PC-3 (cell line): ENCODE measurements at regions of chr6 and their contacts with region 1.

Region 1: GRCh38 chr6:137313928-137314855 is 95.0 kb upstream of the IFNGR1 start:
- DNase-seq: peak; percentile 67
- ATAC-seq: peak; percentile 71
- H3K4me3 ChIP-seq: no peak overlapping the region
- H3K27ac ChIP-seq: no peak overlapping the region
- H3K4me1 ChIP-seq: peaks cover 10% of the 10 kb centered on the region
- H3K27me3 ChIP-seq: no peaks in the 10 kb centered on the region
- CTCF ChIP-seq: peak; percentile 84

Region 2: GRCh38 chr6:137076277-137077068 is 237.7 kb before region 1 on chr6:
- CTCF ChIA-PET with region 1: no interaction called
- POLR2A ChIA-PET with region 1: no interaction called
- intact Hi-C with region 1: loop called (anchors 5 kb)
- DNase-seq: peak; percentile 80
- ATAC-seq: peak; percentile 100
- H3K4me3 ChIP-seq: no peak overlapping the region
- H3K27ac ChIP-seq: no peak overlapping the region
- H3K4me1 ChIP-seq: no peaks in the 10 kb centered on the region
- H3K27me3 ChIP-seq: no peaks in the 10 kb centered on the region
- CTCF ChIP-seq: peak; percentile 79

Region 3: DNA sequence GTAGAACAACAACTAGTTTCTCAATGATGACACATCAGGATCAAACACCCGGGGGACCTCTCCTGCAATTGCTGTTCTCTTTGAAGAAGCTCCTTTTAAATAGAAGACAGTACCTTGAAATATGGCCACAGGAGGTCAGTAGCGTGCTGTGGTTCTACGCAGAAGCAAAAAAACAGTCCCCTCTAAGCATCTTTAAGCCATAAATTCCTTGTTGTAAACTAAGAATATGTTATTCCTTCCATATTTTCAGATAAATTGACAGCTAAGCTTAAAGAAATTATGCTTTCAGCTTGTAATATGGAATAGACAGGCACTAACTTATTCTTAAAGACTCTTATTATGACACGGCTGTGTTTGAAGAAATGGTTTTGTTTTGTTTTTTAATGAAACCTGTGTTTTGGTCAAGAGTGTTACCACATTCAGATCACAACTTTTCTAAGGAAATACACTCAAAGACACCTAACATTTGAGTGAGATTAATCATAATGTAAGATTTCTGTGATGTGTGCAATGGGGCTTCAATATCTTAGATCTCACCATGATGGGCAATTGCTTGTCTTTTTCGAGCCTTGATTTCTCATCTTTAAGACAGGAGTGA is 219.7 kb before region 1 on chr6:
- CTCF ChIA-PET with region 1: interaction called, 13 read pairs
- POLR2A ChIA-PET with region 1: no interaction called
- intact Hi-C with region 1: loop called (anchors 2 kb)
- DNase-seq: peak; percentile 83
- ATAC-seq: peak; percentile 81
- H3K4me3 ChIP-seq: no peak overlapping the region
- H3K27ac ChIP-seq: no peak overlapping the region
- H3K4me1 ChIP-seq: 0 out of 2 replicates have a peak, but pooled peaks cover 4% of the 10 kb centered on the region
- H3K27me3 ChIP-seq: no peaks in the 10 kb centered on the region
- CTCF ChIP-seq: peak; percentile 77

Region 4: DNA sequence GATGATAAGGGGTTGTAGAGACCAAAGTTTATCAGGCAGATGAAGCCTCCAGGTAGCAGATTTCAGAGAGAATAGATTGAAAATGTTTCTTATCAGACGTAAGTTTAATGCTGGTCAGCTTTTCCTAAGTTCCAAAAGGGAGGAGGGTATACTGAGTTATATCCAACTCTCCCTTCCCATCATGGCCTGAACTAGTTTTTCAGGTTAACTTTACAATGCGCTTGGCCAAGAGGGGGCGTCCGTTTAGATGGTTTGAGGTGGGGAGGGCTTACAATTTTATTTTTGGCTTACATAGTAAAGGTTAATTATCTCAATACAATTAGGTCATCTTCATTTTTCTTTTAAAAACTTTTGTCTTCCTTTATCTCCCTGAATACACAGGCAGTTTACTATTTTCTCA is 121.4 kb before region 1 on chr6:
- CTCF ChIA-PET with region 1: interaction called, 11 read pairs
- POLR2A ChIA-PET with region 1: no interaction called
- intact Hi-C with region 1: no loop called
- DNase-seq: no peak
- ATAC-seq: no peak
- H3K4me3 ChIP-seq: no peak overlapping the region
- H3K27ac ChIP-seq: no peak overlapping the region
- H3K4me1 ChIP-seq: no peaks in the 10 kb centered on the region
- H3K27me3 ChIP-seq: no peaks in the 10 kb centered on the region
- CTCF ChIP-seq: no peak

Region 5: GRCh38 chr6:137271245-137272183 is 42.7 kb before region 1 on chr6:
- CTCF ChIA-PET with region 1: interaction called, 6 read pairs
- POLR2A ChIA-PET with region 1: no interaction called
- intact Hi-C with region 1: loop called (anchors 1 kb)
- DNase-seq: peak; percentile 67
- ATAC-seq: 0 out of 2 replicates have a peak, but pooled peaks have one; percentile 43
- H3K4me3 ChIP-seq: no peak overlapping the region
- H3K27ac ChIP-seq: no peak overlapping the region
- H3K4me1 ChIP-seq: no peaks in the 10 kb centered on the region
- H3K27me3 ChIP-seq: no peaks in the 10 kb centered on the region
- CTCF ChIP-seq: peak; percentile 84

Region 6: GRCh38 chr6:137363805-137364138 is 49.6 kb after region 1 on chr6:
- CTCF ChIA-PET with region 1: interaction called, 10 read pairs
- POLR2A ChIA-PET with region 1: no interaction called
- intact Hi-C with region 1: no loop called
- DNase-seq: no peak
- ATAC-seq: no peak
- H3K4me3 ChIP-seq: no peak overlapping the region
- H3K27ac ChIP-seq: no peak overlapping the region
- H3K4me1 ChIP-seq: no peaks in the 10 kb centered on the region
- H3K27me3 ChIP-seq: no peaks in the 10 kb centered on the region
- CTCF ChIP-seq: no peak

Region 7: GRCh38 chr6:137692806-137693205 is 378.6 kb after region 1 on chr6:
- CTCF ChIA-PET with region 1: no interaction called
- POLR2A ChIA-PET with region 1: no interaction called
- intact Hi-C with region 1: no loop called
- DNase-seq: peak; percentile 21
- ATAC-seq: no peak
- H3K4me3 ChIP-seq: no peak overlapping the region
- H3K27ac ChIP-seq: no peak overlapping the region
- H3K4me1 ChIP-seq: no peaks in the 10 kb centered on the region
- H3K27me3 ChIP-seq: no peaks in the 10 kb centered on the region
- CTCF ChIP-seq: no peak